Right ventricle myocardium superior (tissue), 1 donor: ENCODE measurements at regions of chr15 and their contacts with region 1.

Region 1: DNA sequence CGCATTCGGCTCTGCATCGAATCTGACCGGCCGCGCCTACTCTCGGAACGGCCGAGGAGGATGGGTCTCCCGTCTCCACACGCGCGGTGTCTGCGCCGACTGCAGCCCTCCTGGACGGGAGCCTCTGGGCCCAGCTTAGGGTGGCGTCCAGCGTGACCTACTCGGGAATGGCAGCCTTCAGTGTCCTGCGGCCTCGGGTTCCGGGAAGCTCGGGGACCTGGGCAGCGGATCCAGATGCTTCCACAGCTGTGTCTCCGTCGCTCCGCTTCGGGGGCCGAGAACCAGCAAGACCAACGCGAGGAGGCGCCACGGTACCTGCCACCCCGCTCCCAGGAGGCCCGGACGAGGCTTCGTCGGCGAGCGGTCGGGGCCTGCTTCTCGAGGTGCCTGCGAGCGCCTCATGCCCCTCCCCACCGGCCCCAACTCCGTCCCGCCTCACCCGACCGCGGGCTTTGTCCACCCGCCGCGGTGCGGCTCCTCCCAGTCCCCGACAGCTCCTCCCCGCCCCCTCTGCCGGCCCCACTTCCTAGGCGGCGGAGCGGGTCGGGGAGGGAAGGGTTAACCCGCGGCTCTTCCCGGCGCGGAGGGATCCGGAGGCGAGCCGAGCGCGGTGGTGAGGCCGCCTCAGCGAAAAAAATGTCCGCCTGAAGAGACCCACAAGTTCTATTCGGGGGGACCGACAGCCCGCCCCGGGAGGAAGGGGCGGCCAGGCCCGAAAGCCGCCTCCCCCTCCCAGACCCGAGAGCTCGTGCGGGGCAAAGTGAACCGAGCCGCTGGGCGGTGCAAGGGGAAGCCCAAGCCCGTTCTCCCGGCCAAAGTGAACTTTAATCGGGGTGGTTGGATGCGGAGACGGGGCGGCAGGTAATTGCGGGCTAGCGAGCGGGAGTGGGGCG is at the start of gene TCF12:
- DNase-seq: peak; percentile 96
- ATAC-seq: peak; percentile 96
- total RNA-seq, gene TCF12: 32.9 TPM

Region 2: GRCh38 chr15:56869573-56869972 is 48.7 kb before region 1 on chr15:
- intact Hi-C with region 1: no loop called
- DNase-seq: peak; percentile 51
- ATAC-seq: no peak

Region 3: DNA sequence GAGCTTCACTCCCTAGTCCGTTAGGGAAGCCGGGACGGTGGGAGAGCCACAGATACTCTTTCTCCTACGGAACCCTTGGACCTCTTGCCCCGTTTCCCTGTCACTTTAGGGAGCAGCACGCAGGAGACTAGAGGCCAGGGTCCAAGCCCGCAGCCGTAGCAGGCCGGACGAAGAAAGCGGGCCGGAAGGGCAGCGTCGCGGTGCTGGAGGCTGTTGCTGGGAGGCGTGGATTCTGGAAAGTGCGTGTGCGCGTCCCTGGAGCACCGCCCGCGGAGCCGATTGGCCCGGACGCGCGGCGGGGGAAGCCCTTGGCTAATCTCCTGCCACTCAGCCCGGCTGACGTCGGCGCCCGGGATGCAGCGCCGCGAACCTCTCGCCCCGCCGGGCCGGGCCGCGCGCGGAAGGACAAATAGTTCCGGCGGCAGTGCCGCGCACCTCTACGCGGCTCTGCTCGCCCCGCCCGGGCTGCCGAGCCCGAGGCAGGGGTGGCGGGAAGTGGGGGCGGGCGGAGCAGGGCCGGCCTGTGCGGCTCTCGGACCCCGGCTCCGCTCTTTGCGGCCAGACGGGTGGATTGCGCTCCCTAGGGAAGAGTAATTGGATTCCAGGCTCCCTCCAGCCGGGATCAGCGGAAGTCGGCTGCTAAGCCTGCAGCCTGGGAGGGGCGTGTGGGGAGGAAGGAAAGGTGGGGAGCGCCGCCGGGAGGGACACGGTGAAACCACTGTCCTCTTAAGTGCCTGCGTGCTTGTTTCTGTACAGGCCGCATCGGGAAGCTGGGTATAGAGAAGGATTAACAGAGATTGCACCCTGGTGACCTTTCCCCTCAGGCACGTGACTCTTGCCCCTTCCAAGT is 31.1 kb before region 1 on chr15:
- intact Hi-C with region 1: loop called (anchors 2 kb)
- DNase-seq: peak; percentile 96
- ATAC-seq: peak; percentile 99

Region 4: DNA sequence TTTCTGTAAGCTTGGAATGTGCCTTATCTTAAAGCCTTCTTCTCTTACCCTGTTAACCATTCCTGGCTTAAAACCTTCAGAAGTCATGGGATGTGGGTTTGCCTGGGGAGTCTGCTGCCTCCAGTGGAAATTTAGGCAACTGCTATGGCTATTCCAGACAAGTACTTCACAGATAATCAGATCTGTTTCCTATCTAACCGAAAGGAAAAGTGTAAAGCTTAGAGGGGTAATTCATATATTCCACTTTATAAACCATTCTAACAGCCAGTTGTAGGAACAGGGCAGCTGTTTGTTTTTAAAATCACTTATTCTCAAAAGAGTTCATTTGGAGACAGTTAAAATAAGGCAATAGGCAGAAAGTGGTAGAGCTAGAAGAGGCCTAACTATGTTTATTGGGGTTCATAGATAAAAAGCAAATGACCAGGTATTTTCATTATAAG is 220.1 kb after region 1 on chr15:
- intact Hi-C with region 1: loop called (anchors 10 kb)
- DNase-seq: no peak
- ATAC-seq: peak; percentile 73